ENCODE measurements at regions of chrX and their contacts with region 1.

Region 1: DNA sequence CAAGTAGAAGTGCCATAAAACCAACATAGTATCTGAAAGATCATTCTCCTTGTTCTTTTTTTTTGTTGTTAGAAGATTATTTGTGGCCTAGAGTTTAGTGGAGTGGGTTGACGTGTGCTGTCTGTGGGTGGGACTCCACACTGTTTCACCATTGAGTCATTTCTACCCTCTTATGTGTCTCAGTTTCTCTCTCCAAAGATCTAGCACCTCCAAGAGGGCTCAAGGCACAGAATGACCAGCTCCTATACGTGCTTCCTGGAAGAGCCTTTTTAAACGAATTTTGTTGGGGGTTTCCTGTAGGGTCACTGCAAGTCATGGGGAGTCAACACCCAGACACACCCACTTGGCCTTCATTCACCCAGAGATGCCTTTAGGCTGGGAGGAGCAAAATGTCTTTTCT is 150.1 kb downstream of the KLF8 start:
- DNase-seq: peak; percentile 8
- H3K4me3 Mint-ChIP-seq: peak overlapping the region; percentile 58
- H3K27ac Mint-ChIP-seq: peak overlapping the region; percentile 88
- H3K4me1 Mint-ChIP-seq: peaks cover 38% of the 10 kb centered on the region
- H3K27me3 Mint-ChIP-seq: no peaks in the 10 kb centered on the region

Region 2: GRCh38 chrX:56366901-56367300 is 15.4 kb before region 1 on chrX:
- intact Hi-C with region 1: loop called (anchors 1 kb)
- DNase-seq: no peak
- H3K4me3 Mint-ChIP-seq: no peak overlapping the region
- H3K27ac Mint-ChIP-seq: no peak overlapping the region
- H3K4me1 Mint-ChIP-seq: peaks cover 56% of the 10 kb centered on the region
- H3K27me3 Mint-ChIP-seq: no peaks in the 10 kb centered on the region

Region 3: GRCh38 chrX:56397636-56398035 is 15.4 kb after region 1 on chrX:
- intact Hi-C with region 1: loop called (anchors 1 kb)
- DNase-seq: peak; percentile 2
- H3K4me3 Mint-ChIP-seq: peak overlapping the region; percentile 66
- H3K27ac Mint-ChIP-seq: peak overlapping the region; percentile 83
- H3K4me1 Mint-ChIP-seq: peaks cover 45% of the 10 kb centered on the region
- H3K27me3 Mint-ChIP-seq: no peaks in the 10 kb centered on the region